ENCODE measurements at regions of chr20 and their contacts with region 1.

Region 1: DNA sequence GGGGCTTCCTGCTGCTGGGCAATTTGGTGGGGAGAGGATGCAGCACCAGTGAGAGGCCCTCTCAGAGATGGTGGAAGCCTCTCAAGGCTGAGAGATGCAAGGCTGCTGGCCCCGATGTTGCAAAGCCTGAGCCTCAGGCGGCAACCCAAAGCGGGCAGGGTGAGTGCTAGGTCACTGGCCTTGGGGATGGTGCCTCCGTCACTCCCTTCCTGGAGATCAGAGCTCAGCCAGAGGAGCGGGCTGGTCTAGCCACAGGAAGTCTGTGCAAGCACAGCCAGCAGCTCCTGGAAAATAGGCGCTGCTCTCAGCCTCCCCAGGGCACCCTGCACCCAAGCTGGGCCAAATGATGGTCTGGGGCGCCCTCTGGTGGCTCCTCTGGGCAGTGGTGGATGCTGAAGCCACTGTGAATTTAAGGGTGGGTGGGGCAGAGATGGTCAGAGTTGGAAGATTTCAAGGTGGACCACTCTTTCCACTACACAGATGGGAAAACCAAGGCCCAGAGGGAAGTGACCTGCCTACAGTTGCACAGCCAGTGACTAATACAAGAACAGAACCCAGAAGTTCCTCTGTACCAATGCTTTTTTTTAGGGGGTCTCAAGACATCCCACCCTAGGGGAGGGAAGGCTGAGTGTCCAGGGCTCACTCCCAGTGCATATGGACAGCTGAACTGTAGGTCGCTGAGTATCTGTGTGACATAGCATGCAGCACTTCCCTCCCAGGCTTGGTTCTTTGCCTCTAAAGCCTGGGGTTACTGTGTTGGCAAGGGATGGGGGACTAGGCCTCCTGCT is 20.8 kb downstream of the C20orf203 start:
- DNase-seq: peak; percentile 87 to 92 (median 89)
- ATAC-seq: peak; percentile 92
- H3K4me3 ChIP-seq: no peak overlapping the region
- H3K27ac ChIP-seq: no peak overlapping the region
- H3K4me1 ChIP-seq: peaks cover 34 to 41% of the 10 kb centered on the region in 2 experiments
- H3K27me3 ChIP-seq: no peaks in the 10 kb centered on the region
- CTCF ChIP-seq: peak; percentile 97 to 98 (median 97)
- EP300 ChIP-seq: peak; percentile 42; the same call in 1 of the 2 replicates
- POLR2A ChIP-seq: no peak
- RAD21 ChIP-seq: peak; percentile 99

Region 2: DNA sequence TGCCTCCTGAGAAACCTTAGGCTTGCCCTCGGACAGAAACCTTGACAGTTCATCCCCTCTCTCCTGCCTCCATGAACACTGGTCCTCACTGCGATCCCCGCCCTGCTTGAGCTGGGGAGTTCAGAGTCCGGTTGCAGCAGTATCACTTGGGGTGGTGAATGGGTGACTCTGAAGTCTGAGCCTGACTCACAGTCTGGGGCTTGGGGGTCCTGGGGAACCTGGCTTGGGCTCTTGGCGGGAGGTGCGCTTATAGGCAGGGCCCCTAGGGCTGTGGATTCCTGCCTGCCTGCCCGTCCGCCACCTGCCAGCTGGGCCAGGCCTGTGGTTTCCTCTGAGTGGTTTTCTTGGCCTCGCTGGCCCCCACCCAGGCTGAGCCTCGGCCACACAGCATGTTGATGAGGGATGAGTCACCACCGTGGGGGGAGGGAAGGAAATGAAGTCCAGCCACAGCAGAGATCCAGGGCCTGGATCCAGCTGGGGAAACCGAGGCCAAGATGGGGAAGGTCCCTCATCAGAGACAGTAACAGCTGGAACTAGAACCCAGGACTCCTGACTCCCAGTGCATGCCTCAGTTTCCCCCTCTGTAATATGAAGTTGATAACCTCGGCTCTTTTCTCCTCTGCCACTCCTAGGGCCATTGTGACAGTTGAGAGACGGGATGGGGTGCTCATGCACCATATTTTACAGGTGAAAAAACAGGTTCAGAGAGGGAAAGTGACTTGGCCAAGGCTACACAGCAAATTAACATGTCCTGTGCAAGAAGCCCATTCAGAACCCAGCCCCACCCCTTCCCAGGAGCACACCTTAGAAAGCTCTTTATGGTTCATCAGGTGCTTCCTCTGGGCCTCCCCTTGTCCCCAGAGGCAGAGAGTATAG is 816.7 kb before region 1 on chr20:
- CTCF ChIA-PET with region 1: no interaction called
- POLR2A ChIA-PET with region 1: no interaction called
- in situ Hi-C with region 1: loop called (anchors 25 kb)
- intact Hi-C with region 1: no loop called
- DNase-seq: peak; percentile 87 to 90 (median 88)
- ATAC-seq: peak; percentile 87
- H3K4me3 ChIP-seq: no peak overlapping the region
- H3K27ac ChIP-seq: peak overlapping the region; percentile 49; the same call in 2 of the 3 replicates
- H3K4me1 ChIP-seq: peaks cover 35 to 51% of the 10 kb centered on the region in 2 experiments
- H3K27me3 ChIP-seq: no peaks in the 10 kb centered on the region
- CTCF ChIP-seq: no peak
- EP300 ChIP-seq: peak; percentile 46; the same call in 1 of the 2 replicates
- POLR2A ChIP-seq: no peak
- RAD21 ChIP-seq: no peak

Region 3: DNA sequence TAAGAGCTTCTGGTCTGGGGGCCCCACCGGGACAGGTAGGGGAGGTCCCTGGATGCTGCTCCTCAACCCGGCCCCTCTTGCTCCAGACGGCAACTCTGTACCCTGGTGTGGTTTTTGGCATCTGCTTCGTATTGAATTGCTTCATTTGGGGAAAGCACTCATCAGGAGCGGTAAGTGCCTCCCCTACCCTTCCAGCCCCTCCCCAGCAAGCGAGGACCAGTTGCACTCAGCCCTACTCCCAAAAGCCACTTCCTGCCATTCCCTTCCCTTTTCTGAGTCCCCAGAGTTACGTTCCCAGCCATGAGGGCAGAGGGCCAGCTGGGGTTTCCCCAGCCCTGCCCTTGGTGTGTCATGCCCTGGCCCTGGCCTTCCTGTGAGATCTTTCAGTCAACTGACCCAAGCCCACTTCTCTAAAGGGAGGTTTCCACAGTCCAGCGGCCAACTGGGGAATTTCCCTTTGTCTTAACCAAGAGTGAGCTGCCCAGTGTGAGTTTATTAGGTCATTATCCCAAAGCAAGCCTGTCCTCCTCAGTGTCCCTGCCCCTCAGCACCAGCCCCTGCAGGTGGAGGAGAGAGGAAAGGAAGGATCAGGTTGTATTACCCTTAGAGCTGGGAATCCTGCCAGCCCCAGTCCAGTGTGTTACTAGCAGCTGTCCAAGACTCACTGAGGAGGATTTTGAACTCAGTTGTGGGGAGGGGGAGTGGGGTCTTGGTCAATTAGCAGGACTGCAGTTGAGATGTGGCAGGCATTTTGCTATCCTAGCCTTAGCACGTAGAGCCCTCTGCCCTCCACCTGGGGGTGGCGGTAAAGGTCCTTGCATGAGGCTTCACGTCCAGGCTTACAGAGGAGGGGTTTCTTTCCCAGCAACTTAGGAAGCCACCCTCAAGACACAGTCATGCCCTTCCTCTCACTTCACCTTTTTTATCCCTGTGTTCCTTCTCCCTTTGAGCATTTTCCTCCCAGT is 497.6 kb before region 1 on chr20:
- CTCF ChIA-PET with region 1: interaction called, 3 read pairs
- POLR2A ChIA-PET with region 1: no interaction called
- in situ Hi-C with region 1: loop called (anchors 25 kb)
- intact Hi-C with region 1: loop called (anchors 10 kb)
- DNase-seq: peak in 3 of 4 experiments; percentile 32 to 63 (median 41)
- ATAC-seq: peak; percentile 79
- H3K4me3 ChIP-seq: no peak overlapping the region
- H3K27ac ChIP-seq: no peak overlapping the region
- H3K4me1 ChIP-seq: peaks cover 9 to 14% of the 10 kb centered on the region in 2 experiments
- H3K27me3 ChIP-seq: no peaks in the 10 kb centered on the region
- CTCF ChIP-seq: peak; percentile 47 to 73 (median 68)
- EP300 ChIP-seq: no peak
- POLR2A ChIP-seq: no peak
- RAD21 ChIP-seq: peak; percentile 23 to 78; a peak in 2 of 4 replicates

Region 4: DNA sequence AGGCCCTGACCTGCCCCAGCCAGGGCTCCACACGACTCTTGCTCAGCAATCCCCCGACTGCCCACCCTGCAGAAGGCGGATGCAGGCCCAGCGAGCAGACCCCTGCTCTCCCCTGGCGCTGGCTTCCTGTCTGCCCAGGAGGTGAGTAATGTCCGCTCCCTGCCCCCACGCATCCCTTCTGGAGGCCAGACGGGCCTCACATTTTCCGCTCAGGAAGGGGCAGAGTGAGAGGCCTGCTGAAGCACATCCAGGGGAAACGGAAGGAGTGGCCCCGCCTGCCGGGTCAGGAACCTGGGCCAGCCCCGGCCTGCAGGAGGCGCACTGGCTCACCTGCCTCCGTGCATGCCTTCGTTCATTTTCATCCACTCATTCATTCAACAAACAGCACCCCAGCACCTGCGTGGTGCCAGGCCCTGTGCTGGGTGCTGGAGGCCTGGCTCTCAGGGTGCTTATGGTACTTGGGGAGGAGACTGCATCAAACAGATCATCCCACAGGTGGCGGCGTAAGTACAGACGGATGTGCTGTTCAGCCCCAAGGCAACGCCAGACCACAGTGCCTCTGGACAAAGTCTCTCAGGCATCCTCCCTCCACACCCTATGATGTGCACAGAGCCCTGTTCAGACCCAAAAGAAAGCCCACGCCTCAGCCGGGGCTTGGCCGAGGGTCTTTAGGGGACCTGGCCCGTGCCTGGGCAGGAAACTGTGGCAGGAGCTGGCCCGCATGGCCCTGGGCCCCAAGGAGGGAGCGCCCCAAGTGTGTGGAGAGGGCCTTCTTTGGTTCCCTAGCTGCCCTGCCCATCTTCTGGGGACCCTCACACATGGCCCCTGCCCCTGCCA is 182.7 kb before region 1 on chr20:
- CTCF ChIA-PET with region 1: interaction called, 3 read pairs
- POLR2A ChIA-PET with region 1: no interaction called
- in situ Hi-C with region 1: no loop called
- intact Hi-C with region 1: loop called (anchors 2 kb)
- DNase-seq: peak; percentile 42 to 57 (median 54)
- ATAC-seq: peak; percentile 38
- H3K4me3 ChIP-seq: no peak overlapping the region
- H3K27ac ChIP-seq: no peak overlapping the region
- H3K4me1 ChIP-seq: peaks cover 19 to 81% of the 10 kb centered on the region in 2 experiments
- H3K27me3 ChIP-seq: no peaks in the 10 kb centered on the region
- CTCF ChIP-seq: peak; percentile 45 to 58 (median 50); a peak in 5 of 6 replicates
- EP300 ChIP-seq: no peak
- POLR2A ChIP-seq: no peak
- RAD21 ChIP-seq: peak in 1 of 2 experiments; percentile 58; a peak in 2 of 4 replicates

Region 5: DNA sequence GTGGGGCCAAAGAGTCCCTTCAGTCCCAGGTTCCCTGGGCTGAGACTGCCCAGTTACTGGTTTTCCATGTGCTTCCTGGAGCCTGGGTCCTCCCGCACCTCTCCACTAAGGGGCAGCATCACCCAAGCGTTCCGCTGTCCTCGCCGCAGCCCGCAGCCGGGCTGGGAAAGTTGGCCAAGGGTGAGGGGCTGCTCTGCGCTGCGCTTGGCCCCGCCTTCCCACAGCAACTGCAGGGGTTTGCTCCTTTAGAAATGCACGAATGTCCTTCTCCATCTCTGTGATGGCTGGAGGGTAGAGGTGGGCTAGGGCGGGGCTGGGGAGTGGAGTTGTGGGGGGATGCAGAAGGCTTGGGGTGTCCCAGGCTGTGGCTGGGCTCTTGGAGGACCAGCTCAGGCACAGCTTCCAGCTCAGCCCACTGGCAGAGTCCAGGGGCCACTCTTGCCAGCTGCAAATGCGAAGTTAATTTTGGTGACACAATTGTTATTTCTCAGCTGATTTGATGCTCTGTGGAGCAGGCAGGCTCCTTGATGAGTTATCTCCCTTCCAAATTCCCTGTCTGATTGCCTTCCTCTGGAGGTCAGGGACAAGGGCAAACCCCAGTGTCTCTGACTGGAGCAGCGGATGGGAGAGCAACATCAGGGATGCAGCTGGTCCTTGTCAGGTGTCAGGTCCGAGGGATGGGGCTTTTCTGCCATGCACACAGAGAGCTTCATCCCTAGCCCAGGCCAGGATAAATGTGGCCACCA is 131.0 kb before region 1 on chr20:
- CTCF ChIA-PET with region 1: interaction called, 85 read pairs
- POLR2A ChIA-PET with region 1: interaction called, 5 read pairs
- in situ Hi-C with region 1: loop called (anchors 5 kb)
- intact Hi-C with region 1: loop called (anchors 1 kb)
- DNase-seq: peak; percentile 80 to 86 (median 82)
- ATAC-seq: peak; percentile 97
- H3K4me3 ChIP-seq: no peak overlapping the region
- H3K27ac ChIP-seq: no peak overlapping the region
- H3K4me1 ChIP-seq: peaks cover 5 to 44% of the 10 kb centered on the region in 2 experiments; a peak in 3 of 5 replicates
- H3K27me3 ChIP-seq: no peaks in the 10 kb centered on the region
- CTCF ChIP-seq: peak; percentile 90 to 92 (median 91)
- EP300 ChIP-seq: no peak; the same call in 1 of the 2 replicates
- POLR2A ChIP-seq: no peak
- RAD21 ChIP-seq: peak; percentile 96 to 98

Region 6: DNA sequence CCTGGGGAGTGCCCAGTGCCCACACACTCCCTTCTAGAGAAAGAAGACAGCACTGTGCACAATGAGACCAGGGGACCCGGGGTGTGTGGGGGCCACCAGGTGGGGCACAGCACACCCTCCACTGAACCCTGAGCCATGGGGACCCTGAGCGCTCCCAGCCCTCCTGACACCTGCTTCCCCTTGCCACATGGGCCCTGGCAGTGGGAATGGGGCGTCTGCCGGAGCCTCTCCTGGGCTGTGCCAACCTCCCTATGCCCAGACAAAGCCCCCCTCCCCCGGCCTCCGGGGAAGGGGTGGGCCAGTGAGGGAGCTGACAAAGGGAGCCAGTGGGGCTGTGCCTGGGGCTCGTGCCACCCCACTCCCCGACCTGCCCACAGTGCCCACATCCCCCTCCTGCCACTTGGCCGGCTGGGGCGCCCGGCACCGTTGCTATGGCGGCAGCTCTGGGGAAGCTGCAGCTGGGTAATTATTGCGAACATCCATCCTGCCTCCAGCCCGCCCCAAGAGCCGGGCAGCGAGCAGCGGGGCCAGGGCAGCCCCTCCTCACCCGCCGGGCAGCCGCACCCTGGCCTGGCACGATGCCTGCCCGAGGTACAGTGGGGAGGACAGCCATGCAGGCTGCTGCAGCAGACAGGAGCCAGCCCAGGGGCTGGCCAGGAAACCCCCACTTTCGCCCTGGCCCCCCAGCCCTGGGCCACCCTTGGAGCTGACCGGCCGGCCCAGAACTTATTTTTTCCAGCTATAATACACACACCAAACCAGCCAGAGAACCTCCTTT is 25.9 kb before region 1 on chr20:
- CTCF ChIA-PET with region 1: no interaction called
- POLR2A ChIA-PET with region 1: interaction called, 110 read pairs
- in situ Hi-C with region 1: no loop called
- intact Hi-C with region 1: no loop called
- DNase-seq: no peak
- ATAC-seq: peak; percentile 0; the same call in 2 of the 3 replicates
- H3K4me3 ChIP-seq: peak overlapping the region; percentile 20; the same call in 1 of the 2 replicates
- H3K27ac ChIP-seq: peak overlapping the region; percentile 84
- H3K4me1 ChIP-seq: peaks cover 59 to 83% of the 10 kb centered on the region in 2 experiments
- H3K27me3 ChIP-seq: no peaks in the 10 kb centered on the region
- CTCF ChIP-seq: no peak
- EP300 ChIP-seq: no peak
- POLR2A ChIP-seq: no peak
- RAD21 ChIP-seq: no peak